ENCODE measurements at regions of chr4 and their contacts with region 1.

Region 1: GRCh38 chr4:3047464-3048286 is 26.7 kb downstream of the HTT-AS start:
- DNase-seq: peak; percentile 92
- H3K4me3 ChIP-seq: peak overlapping the region; percentile 20
- H3K27ac ChIP-seq: peak overlapping the region; percentile 80
- H3K4me1 ChIP-seq: peaks cover 41% of the 10 kb centered on the region
- CTCF ChIP-seq: peak; percentile 80

Region 2: DNA sequence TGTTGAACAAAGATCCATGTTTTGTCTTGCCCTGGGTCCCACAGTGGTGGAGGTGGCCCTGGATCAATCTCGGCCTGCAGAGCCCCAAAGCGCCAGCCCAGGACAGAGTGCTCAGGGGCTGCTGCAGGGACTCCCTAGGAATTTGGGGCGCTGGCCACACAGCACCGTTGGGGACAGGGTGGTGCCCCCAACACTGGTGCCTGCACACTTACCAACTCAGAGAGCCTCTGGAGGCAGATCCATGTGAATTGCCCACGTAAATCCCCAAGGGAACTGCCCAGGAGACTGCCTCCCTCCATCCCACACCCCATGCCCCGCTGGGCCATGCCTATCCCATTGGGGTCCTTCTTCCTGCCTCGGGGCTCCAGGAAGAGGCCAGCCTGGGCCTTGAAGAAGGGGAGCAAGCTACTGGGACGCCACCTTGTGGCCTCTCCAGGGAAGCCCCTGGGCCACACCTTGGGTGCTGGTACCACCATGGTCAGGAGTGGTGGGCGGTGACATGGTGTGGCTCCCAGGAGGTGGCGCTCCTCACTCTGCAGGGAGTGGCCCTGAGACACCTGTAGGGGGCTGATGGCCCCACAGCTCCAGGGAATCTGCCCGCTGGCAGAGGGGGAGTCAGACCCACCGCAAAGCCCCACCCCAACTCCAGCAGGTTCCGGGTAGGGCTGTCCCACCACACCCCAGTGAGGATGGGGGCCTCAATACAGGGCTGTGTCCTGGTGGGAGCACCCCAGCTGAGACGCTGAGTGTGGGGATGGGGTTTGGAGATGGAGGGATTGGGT is 606.1 kb before region 1 on chr4:
- CTCF ChIA-PET with region 1: no interaction called
- POLR2A ChIA-PET with region 1: no interaction called
- intact Hi-C with region 1: no loop called
- DNase-seq: peak; percentile 90
- H3K4me3 ChIP-seq: no peak overlapping the region
- H3K27ac ChIP-seq: no peak overlapping the region
- H3K4me1 ChIP-seq: peaks cover 8% of the 10 kb centered on the region
- CTCF ChIP-seq: peak; percentile 99

Region 3: GRCh38 chr4:3074078-3074795 is 26.6 kb after region 1 on chr4 and contains the starts of genes HTT and HTT-AS:
- CTCF ChIA-PET with region 1: no interaction called
- POLR2A ChIA-PET with region 1: interaction called, 4 read pairs
- intact Hi-C with region 1: loop called (anchors 1 kb)
- DNase-seq: peak; percentile 96
- H3K4me3 ChIP-seq: peak within 1 kb of the TSS; percentile 100
- H3K27ac ChIP-seq: peak within 1 kb of the TSS; percentile 82
- H3K4me1 ChIP-seq: peaks cover 34% of the 10 kb centered on the region
- CTCF ChIP-seq: no peak
- total RNA-seq, gene HTT: 36.4 and 41.2 TPM in 2 replicates
- total RNA-seq, gene HTT-AS: not detected in 2 replicates

Region 4: DNA sequence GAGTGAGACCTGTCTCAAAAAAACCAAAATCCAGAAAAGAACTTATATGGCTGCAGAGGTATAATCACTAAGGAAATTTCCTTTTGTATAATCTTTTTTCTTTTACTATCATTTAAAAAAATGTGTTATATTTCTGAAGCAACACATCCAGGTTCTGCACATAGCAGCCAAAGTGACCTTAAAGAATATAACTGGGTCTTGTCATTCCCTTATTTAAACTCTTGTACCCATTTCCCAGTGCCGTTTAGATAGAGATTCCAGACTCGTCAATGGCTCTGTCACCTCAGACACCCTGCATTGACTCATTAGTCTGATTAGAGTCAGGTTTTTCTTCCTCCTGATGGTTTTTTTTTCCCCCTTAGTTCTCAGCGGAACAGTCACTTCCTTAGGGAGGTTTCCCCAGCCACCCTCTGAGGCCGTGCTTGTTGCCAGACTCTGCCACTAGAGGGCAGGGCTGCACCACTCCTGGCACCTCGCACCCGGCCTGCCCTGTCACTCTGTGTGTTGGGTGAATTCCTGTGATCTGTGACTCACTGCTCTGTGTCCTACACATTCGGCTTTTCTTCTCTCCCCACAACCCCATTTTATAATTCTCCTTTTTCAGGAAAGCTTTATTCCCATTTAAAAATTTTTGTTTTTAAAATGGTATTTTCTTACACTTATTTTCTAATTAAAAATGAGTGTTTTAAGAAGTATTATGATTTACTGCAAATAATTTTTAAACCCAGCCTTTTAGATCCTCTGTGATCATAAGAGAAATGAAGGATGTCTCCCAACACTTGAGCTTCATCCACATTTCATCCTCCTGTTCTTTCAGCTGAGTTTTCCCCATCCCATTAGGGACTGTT is 58.9 kb after region 1 on chr4:
- CTCF ChIA-PET with region 1: no interaction called
- POLR2A ChIA-PET with region 1: no interaction called
- intact Hi-C with region 1: loop called (anchors 1 kb)
- DNase-seq: peak; percentile 72
- H3K4me3 ChIP-seq: no peak overlapping the region
- H3K27ac ChIP-seq: no peak overlapping the region
- H3K4me1 ChIP-seq: no peaks in the 10 kb centered on the region
- CTCF ChIP-seq: peak; percentile 99

Region 5: DNA sequence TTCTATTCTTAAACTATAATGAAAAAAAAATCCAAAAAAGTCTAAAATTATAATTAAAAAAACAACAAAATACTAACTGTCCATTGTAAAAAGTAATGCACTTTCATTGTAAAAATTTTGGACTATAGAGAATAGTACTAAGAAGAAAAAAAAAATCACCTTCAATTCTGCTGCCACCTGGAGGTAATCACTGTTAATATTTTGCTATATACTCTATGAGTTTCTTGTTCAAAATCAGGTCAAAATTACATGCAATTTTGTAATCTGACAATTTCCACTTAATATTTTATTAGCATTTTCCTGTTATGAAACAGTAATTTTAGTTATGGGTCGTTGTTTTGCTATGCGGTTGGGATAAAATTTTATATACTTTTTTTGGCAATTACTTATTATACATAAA is 88.8 kb after region 1 on chr4:
- CTCF ChIA-PET with region 1: interaction called, 3 read pairs
- POLR2A ChIA-PET with region 1: no interaction called
- intact Hi-C with region 1: loop called (anchors 5 kb)
- DNase-seq: peak; percentile 7
- H3K4me3 ChIP-seq: no peak overlapping the region
- H3K27ac ChIP-seq: no peak overlapping the region
- H3K4me1 ChIP-seq: no peaks in the 10 kb centered on the region
- CTCF ChIP-seq: peak; percentile 74

Region 6: DNA sequence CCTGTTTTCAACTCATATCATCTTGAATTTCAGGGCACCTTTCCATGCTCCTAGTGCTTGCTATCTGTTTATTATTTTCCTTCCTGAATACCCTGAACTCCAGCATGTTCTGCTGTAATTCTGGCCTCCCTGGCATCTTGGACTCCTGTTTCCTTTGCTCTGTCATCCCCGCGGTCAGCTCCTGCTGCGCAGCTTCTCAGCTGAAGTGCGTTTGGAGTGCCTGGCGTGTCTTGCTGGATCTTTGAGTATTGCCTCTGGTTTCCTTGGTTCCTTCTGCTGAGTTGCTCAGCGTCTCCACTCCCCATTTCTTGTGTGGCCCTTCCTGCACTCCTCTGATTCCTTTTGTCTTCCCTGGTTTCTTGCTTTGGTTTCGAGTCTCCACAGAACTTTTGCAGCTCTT is 111.2 kb after region 1 on chr4:
- CTCF ChIA-PET with region 1: no interaction called
- POLR2A ChIA-PET with region 1: no interaction called
- intact Hi-C with region 1: no loop called
- DNase-seq: no peak
- H3K4me3 ChIP-seq: no peak overlapping the region
- H3K27ac ChIP-seq: no peak overlapping the region
- H3K4me1 ChIP-seq: no peaks in the 10 kb centered on the region
- CTCF ChIP-seq: no peak